AG04450 (cell line): ENCODE measurements at regions of chr1 and their contacts with region 1.

Region 1: GRCh38 chr1:204398217-204399081 is 13.2 kb downstream of the PPP1R15B start:
- DNase-seq: no peak
- H3K4me3 ChIP-seq: no peak overlapping the region
- H3K27ac ChIP-seq: no peak overlapping the region
- H3K27me3 ChIP-seq: no peaks in the 10 kb centered on the region
- CTCF ChIP-seq: peak; percentile 85

Region 2: GRCh38 chr1:203871107-203871875 is 527.2 kb before region 1 on chr1:
- CTCF ChIA-PET with region 1: interaction called, 13 read pairs
- POLR2A ChIA-PET with region 1: interaction called, 3 read pairs
- DNase-seq: peak; percentile 62
- H3K4me3 ChIP-seq: no peak overlapping the region
- H3K27ac ChIP-seq: no peak overlapping the region
- H3K27me3 ChIP-seq: no peaks in the 10 kb centered on the region
- CTCF ChIP-seq: peak; percentile 99

Region 3: GRCh38 chr1:204207136-204207616 is 191.3 kb before region 1 on chr1:
- CTCF ChIA-PET with region 1: interaction called, 21 read pairs
- POLR2A ChIA-PET with region 1: no interaction called
- DNase-seq: no peak
- H3K4me3 ChIP-seq: no peak overlapping the region
- H3K27ac ChIP-seq: no peak overlapping the region
- H3K27me3 ChIP-seq: no peaks in the 10 kb centered on the region
- CTCF ChIP-seq: peak; percentile 92

Region 4: GRCh38 chr1:204307334-204307883 is 91.0 kb before region 1 on chr1:
- CTCF ChIA-PET with region 1: no interaction called
- POLR2A ChIA-PET with region 1: no interaction called
- DNase-seq: no peak
- H3K4me3 ChIP-seq: peak overlapping the region; percentile 56
- H3K27ac ChIP-seq: peak overlapping the region; percentile 58
- H3K27me3 ChIP-seq: no peaks in the 10 kb centered on the region
- CTCF ChIP-seq: peak; percentile 44

Region 5: DNA sequence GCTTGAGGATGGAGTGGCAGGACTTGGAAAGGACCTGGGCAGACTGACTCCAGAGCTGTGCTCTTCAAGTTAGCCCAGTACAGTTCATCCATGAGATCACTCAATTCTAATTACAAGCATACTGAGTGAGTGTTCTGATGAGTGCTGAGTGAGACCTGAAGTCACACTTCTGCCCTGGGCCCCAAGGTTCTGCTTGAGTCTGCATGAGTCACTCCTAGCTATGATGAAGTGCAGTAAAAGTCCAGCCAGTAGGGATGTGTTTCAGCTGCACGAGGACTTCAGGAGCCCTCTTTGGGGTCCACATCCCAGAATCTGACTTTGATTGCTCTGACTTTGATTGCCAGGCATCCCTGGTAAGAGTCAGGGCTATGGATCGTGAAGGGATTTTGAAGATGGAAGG is 74.6 kb before region 1 on chr1:
- CTCF ChIA-PET with region 1: interaction called, 12 read pairs
- POLR2A ChIA-PET with region 1: no interaction called
- DNase-seq: no peak
- H3K4me3 ChIP-seq: no peak overlapping the region
- H3K27ac ChIP-seq: no peak overlapping the region
- H3K27me3 ChIP-seq: no peaks in the 10 kb centered on the region
- CTCF ChIP-seq: no peak

Region 6: DNA sequence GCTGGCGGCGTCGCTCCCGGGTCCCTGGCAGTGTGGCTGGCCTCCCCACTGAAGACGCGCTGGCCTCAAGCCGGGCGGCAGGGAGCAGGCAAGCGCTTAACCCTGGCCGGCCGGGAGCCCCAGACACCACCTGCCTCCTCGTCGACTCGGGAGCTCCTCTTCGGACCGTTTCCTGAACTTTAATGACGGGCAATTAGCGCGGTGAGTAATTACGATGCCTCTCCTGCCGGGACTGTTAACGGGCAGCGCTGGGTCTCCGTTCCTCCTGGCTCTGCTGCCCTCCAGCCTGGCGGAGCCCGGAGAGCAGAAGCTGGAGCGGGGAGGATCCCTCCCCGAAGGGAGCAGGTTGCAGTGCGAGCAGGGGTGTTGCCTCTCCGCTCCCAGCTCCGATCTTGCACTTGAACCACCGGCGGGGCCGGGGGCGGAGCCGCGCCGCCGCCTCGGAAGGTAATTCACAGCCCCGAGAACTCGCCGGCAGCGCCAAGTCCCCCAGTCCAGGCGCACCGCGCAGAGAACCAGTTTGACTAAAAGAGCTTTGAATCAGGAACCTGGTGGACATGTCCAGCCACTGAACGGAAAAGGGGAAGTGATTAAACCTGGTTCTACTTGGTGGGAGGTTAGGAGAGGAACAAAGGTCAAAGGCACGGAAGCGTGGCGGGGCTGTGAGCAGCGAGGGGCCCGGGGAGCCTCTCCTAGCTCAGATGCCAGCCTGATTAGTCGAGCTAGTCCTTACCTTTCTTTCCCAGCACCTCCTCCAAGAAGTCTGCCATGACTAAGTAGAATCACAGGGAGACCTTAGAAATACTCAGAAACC is 20.4 kb before region 1 on chr1:
- CTCF ChIA-PET with region 1: interaction called, 29 read pairs
- POLR2A ChIA-PET with region 1: no interaction called
- DNase-seq: no peak
- H3K4me3 ChIP-seq: peak overlapping the region; percentile 58
- H3K27ac ChIP-seq: no peak overlapping the region
- H3K27me3 ChIP-seq: peaks cover 71% of the 10 kb centered on the region
- CTCF ChIP-seq: no peak

Region 7: DNA sequence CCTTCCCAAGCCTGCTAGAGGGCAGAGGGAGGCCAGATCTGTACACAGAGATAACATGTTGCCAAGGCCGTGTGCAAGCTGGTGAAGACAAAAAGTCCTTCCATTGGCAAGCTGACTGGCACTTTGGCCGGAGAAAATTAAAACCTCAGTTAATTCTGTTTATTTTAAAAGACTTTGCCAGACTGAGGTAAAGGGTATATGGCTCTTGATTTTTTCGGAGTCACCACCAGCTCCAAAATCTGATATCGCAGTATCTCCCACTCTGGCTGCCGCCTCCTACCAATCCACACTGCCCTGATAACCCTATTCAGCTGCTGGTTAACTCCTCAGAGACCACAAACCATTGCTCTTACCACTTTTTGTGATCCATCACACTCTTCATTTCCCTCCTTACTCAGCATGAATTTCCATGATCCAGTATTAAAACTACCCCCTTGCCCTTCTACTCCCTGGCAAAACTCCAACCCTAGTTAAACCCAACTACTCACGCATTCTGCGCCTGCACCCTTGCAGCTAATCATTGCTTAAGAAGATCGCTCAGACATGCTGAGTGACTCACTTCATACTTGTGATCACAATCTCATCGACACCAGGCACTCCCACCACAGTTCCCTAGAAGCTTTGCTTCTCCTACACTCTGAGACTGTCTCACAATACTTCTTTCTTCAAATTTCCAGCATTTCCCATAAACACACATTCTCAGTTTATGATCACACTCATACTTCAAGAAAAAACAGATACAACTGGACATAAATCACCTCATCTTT is 19.0 kb after region 1 on chr1:
- CTCF ChIA-PET with region 1: interaction called, 12 read pairs
- POLR2A ChIA-PET with region 1: no interaction called
- DNase-seq: peak; percentile 86
- H3K4me3 ChIP-seq: peak overlapping the region; percentile 38
- H3K27ac ChIP-seq: peak overlapping the region; percentile 90
- H3K27me3 ChIP-seq: no peaks in the 10 kb centered on the region
- CTCF ChIP-seq: no peak

Region 8: DNA sequence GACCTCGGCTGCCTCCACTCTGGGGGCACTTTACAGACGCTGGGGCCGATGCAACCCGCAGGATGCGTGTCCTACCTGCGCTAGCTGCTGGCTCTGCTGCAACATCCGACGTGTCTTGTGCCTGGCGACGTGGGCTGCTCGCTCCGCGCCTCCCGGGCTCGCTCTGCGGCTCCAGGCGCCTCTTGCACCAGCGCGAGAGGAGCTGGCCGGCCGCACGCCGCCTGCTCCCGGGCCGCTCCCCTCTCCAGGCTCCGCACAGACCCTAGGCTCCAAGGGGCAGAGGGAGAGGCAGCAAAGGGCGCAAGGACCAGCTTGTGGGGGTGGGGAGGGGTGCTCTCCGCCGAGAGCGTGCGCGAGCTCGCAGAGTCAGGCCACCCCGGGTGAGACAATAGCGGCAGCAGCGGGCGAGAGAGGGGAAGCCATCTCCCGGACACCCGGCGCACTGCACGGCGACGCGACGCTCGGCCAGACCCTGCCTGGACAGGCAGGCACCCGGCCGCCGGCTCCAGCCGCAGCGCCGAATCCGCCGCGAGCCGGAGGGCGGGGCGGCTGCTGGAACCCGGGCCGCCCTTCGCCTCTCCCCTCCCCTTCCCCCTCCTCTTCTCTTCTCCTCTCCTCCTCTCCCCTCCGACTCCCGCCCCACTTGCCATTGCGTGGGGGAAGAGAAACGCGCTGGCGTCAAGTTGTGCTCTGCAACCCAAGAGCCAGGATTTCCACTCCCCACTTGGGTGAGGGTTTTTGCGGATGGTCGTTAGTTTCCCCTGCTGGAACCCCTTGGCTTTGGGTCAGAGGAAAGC is 96.0 kb after region 1 on chr1 and contains the start of gene PIK3C2B:
- CTCF ChIA-PET with region 1: interaction called, 19 read pairs
- POLR2A ChIA-PET with region 1: no interaction called
- DNase-seq: peak; percentile 33
- H3K4me3 ChIP-seq: peak within 1 kb of the TSS; percentile 87
- H3K27ac ChIP-seq: peak within 1 kb of the TSS; percentile 70
- H3K27me3 ChIP-seq: peaks cover 8% of the 10 kb centered on the region
- CTCF ChIP-seq: peak; percentile 34; the same call in 1 of the 2 replicates
- polyA plus RNA-seq, gene PIK3C2B: 4.9 and 6.3 TPM in 2 replicates

Region 9: GRCh38 chr1:204714861-204715511 is 316.5 kb after region 1 on chr1:
- CTCF ChIA-PET with region 1: no interaction called
- POLR2A ChIA-PET with region 1: no interaction called
- DNase-seq: no peak
- H3K4me3 ChIP-seq: no peak overlapping the region
- H3K27ac ChIP-seq: no peak overlapping the region
- H3K27me3 ChIP-seq: peaks cover 34% of the 10 kb centered on the region
- CTCF ChIP-seq: no peak

Region 10: DNA sequence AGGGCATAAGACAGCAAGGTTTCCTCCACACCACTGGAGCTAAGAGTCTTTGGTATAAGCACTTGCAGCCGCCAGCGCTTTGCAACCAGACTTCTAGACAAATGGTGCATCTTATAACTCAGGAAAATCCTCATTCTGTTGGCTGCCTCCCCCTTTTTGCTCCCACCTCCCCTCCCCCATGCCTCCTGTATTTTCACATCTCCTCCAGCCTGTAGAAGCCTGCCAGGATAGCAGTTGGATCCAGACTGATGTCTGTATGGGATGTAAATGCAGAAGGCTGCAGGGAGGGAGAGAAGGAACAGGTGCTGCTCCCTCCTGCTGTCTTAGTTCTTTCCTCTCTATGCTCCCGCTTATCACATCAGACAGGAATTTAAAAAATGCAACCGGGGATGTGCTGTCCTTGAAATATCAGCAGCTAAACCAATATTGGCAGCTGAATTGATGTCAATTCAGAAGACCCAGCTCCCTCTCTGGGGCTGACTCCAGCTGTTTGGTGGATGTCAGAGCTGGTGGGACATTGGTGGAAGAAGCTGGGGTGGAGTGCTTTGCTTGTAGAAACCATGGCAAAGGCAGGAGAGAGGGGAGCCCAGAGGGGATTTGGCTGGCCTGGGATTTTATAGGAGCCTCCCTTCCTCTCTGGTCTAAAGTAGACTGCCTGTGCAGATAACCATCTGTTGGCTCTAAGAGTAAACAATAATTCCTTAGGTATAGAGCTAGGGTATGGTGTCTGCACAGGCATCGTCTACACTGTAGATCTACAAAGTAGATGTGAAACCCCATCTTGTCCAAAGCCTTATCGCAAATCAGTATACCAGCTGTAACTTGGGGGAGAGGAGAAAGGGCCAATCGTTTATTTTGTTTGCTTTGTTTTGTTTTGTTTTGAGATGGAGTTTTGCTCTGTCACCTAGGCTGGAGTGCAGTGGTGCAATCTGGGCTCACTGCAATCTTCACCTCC is 525.8 kb after region 1 on chr1:
- CTCF ChIA-PET with region 1: no interaction called
- POLR2A ChIA-PET with region 1: no interaction called
- DNase-seq: no peak
- H3K4me3 ChIP-seq: no peak overlapping the region
- H3K27ac ChIP-seq: no peak overlapping the region
- H3K27me3 ChIP-seq: peaks cover 14% of the 10 kb centered on the region
- CTCF ChIP-seq: no peak